ENCODE measurements at regions of chr4 and their contacts with region 1.

Region 1: DNA sequence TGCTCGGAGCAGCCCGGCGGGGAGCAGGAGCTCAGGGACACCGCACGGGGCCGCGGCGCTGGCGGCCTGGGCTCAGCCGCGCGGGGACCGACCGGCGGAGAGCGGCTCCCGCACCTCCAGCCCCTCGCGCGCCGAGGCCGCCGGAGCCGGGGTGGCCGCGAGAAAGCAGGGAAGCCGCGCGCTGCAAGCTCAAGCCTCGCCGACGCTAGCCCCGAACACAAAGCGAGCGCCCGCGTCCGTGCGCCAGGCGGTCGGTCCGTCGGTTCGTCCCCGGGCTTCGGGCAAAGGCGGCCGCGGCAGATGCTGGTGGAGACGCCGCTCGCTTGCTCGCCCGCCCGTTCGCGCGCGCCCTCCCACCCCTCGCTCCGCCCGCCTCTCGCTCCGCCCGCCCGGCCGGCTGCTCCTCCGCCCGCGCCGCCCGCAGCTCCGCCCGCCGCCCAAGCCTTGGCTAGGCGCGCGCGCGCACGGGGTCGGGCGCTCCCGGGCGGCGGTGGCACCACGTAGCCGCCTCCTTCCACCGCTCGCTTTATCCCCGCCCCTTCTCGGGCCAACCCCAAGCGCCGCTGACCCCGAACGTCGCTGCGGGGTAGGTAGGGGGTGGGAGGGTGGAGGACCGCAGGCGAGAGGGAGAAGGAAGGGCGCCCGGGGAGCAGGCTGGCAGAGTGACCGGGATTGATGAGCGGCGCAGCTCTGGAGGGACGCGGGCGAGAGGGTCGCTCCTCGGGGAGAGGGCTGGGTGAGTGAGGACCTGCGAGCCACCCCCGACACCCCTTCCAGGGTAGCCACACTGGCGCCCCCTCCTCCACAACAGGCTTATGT is at the start of gene TSPAN5:
- DNase-seq: peak; percentile 60 to 90 (median 75)
- ATAC-seq: peak; percentile 87
- H3K4me3 ChIP-seq: peak within 1 kb of the TSS; percentile 61
- H3K4me3 Mint-ChIP-seq: peak within 1 kb of the TSS; percentile 85 to 99 (median 92)
- H3K27ac ChIP-seq: peak within 1 kb of the TSS; percentile 65
- H3K27ac Mint-ChIP-seq: peak within 1 kb of the TSS; percentile 20 to 95 (median 84)
- H3K4me1 ChIP-seq: peaks cover 32 to 40% of the 10 kb centered on the region in 2 donors
- H3K4me1 Mint-ChIP-seq: peaks cover 56 to 87% (median 83%) of the 10 kb centered on the region in 7 donors
- H3K27me3 ChIP-seq: no peaks in the 10 kb centered on the region
- H3K27me3 Mint-ChIP-seq: no peaks in the 10 kb centered on the region
- total RNA-seq, gene TSPAN5: 3.3 to 31.6 (median 10.9) TPM

Region 2: GRCh38 chr4:98260579-98261290 is 397.8 kb before region 1 on chr4:
- CTCF ChIA-PET with region 1: no interaction called
- POLR2A ChIA-PET with region 1: no interaction called
- intact Hi-C with region 1: loop called (anchors 1 to 2 kb)
- DNase-seq: peak in 6 of 9 donors; percentile 69 to 95 (median 78)
- ATAC-seq: peak; percentile 85
- H3K4me3 ChIP-seq: peak overlapping the region; percentile 90
- H3K4me3 Mint-ChIP-seq: peak overlapping the region; percentile 92 to 98 (median 94)
- H3K27ac ChIP-seq: peak overlapping the region; percentile 86
- H3K27ac Mint-ChIP-seq: peak overlapping the region; percentile 84 to 97 (median 92)
- H3K4me1 ChIP-seq: peaks cover 5 to 12% of the 10 kb centered on the region in 2 donors
- H3K4me1 Mint-ChIP-seq: peaks cover 31 to 60% (median 54%) of the 10 kb centered on the region in 7 donors
- H3K27me3 ChIP-seq: no peaks in the 10 kb centered on the region
- H3K27me3 Mint-ChIP-seq: no peaks in the 10 kb centered on the region

Region 3: DNA sequence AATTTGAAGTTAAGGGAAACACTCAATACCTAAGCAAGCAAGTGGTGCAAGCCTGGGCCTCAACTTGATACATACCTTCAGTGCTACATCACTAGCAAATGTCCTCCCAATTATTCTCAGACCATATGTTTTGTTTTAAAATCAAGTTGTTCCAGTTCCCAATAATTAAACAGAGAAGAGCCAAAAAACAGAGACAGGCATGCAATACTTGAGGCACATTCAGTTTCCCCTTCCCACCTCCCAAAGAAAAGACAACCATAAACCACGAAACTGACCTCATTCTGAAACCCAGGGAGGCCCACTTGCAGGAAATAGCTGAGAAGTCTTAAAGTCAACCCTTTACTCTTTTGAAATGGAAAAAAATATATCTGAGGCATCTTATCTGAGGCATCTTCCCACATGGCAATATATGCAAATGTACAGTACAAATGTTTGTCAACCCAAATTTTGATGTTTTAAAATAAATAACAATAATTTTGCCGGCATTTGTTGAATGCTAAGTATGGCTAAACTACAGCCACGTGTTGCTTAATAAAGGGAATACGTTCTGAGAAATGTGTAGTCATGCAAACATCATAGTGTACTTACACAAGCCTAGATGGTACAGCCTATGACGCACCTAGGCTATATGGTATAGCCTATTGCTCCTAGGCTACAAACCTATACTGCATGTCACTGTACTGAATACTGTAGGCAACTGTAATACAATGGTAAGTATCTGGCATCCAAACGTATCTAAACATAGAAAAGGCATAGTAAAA is 147.6 kb before region 1 on chr4:
- CTCF ChIA-PET with region 1: no interaction called
- POLR2A ChIA-PET with region 1: no interaction called
- intact Hi-C with region 1: loop called in 1 of 2 experiments (anchors 2 kb)
- DNase-seq: peak in 1 of 9 donors; percentile 60
- ATAC-seq: no peak
- H3K4me3 ChIP-seq: no peak overlapping the region
- H3K4me3 Mint-ChIP-seq: peak overlapping the region in 1 of 10 donors; percentile 49
- H3K27ac ChIP-seq: no peak overlapping the region
- H3K27ac Mint-ChIP-seq: peak overlapping the region in 1 of 9 donors; percentile 19
- H3K4me1 ChIP-seq: peaks cover 0 to 5% of the 10 kb centered on the region in 2 donors
- H3K4me1 Mint-ChIP-seq: peaks cover 11 to 59% (median 29%) of the 10 kb centered on the region in 7 donors
- H3K27me3 ChIP-seq: no peaks in the 10 kb centered on the region
- H3K27me3 Mint-ChIP-seq: no peaks in the 10 kb centered on the region

Region 4: DNA sequence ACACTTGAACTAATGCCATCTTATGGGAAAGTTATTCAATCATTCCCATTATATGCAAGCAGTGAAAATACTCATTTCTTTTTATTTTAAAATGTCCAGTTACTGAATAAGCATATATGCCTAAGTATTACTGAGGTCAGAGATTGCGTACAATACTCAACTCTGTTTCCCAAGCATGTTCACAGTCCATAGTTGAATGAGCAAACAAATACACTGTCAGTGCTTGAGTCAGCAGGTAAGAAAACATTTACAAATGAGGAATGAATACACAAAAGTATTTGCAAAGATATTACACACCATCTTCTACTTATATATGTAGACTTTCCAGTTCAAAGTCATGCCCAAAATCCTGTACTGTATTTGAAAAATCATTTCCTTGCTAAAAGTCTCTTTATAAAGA is 74.2 kb before region 1 on chr4:
- CTCF ChIA-PET with region 1: no interaction called
- POLR2A ChIA-PET with region 1: no interaction called
- intact Hi-C with region 1: no loop called
- DNase-seq: no peak
- ATAC-seq: no peak
- H3K4me3 ChIP-seq: no peak overlapping the region
- H3K4me3 Mint-ChIP-seq: no peak overlapping the region
- H3K27ac ChIP-seq: no peak overlapping the region
- H3K27ac Mint-ChIP-seq: no peak overlapping the region
- H3K4me1 ChIP-seq: no peaks in the 10 kb centered on the region
- H3K4me1 Mint-ChIP-seq: peaks cover 15 to 42% (median 30%) of the 10 kb centered on the region in 7 donors
- H3K27me3 ChIP-seq: no peaks in the 10 kb centered on the region
- H3K27me3 Mint-ChIP-seq: no peaks in the 10 kb centered on the region

Region 5: DNA sequence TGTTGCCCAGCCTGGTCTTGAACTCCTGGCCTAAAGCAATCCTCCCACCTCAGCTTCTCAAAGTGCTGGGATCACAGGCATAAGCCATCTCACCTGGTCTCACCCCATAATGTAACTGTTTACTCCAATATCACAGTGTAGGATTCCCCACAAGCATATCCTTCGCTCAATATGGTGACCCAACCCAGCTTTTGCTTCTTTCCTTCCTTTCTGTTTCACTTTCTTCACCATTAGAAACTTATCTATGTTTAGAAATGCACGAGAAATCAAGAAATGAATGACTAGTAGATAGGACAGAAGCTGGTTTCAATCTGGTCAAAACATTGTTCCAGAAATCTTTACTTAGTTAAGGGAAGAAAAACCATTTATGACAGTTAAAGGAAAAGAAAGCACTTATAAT is 19.0 kb before region 1 on chr4:
- CTCF ChIA-PET with region 1: interaction called, 3 read pairs
- POLR2A ChIA-PET with region 1: interaction called, 5 read pairs
- intact Hi-C with region 1: loop called (anchors 1 kb)
- DNase-seq: peak in 7 of 9 donors; percentile 10 to 32 (median 15)
- ATAC-seq: peak; percentile 63
- H3K4me3 ChIP-seq: peak overlapping the region; percentile 36
- H3K4me3 Mint-ChIP-seq: peak overlapping the region; percentile 37 to 93 (median 82)
- H3K27ac ChIP-seq: peak overlapping the region; percentile 49
- H3K27ac Mint-ChIP-seq: peak overlapping the region; percentile 79 to 97 (median 87)
- H3K4me1 ChIP-seq: peaks cover 8 to 22% of the 10 kb centered on the region in 2 donors
- H3K4me1 Mint-ChIP-seq: peaks cover 30 to 56% (median 42%) of the 10 kb centered on the region in 7 donors
- H3K27me3 ChIP-seq: no peaks in the 10 kb centered on the region
- H3K27me3 Mint-ChIP-seq: no peaks in the 10 kb centered on the region

Region 6: DNA sequence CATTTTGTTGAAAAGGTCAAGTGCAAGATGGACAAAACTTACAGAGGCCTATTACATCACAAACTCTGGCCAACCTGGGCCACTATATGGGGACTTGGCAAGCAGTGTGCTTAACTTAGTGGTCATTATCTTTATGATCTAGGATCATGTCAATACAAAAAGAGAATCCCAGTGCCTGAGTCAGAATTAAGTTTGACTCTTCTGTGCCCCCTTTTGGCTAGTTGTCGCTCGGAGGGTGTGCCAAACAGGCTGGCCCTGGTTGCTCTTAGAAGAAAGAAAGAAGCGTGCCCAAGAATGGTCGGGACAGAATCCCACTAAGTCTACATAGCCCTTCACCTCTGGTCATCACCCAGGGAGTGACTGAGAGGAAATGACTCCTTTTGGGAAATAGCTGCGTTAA is 170.3 kb after region 1 on chr4:
- CTCF ChIA-PET with region 1: no interaction called
- POLR2A ChIA-PET with region 1: no interaction called
- intact Hi-C with region 1: loop called (anchors 5 kb)
- DNase-seq: peak in 5 of 9 donors; percentile 16 to 40 (median 20)
- ATAC-seq: no peak
- H3K4me3 ChIP-seq: no peak overlapping the region
- H3K4me3 Mint-ChIP-seq: no peak overlapping the region
- H3K27ac ChIP-seq: no peak overlapping the region
- H3K27ac Mint-ChIP-seq: no peak overlapping the region
- H3K4me1 ChIP-seq: no peaks in the 10 kb centered on the region
- H3K4me1 Mint-ChIP-seq: peaks cover 0 to 16% (median 0%) of the 10 kb centered on the region in 7 donors
- H3K27me3 ChIP-seq: no peaks in the 10 kb centered on the region
- H3K27me3 Mint-ChIP-seq: peaks cover 0 to 14% (median 0%) of the 10 kb centered on the region in 5 donors

Region 7: GRCh38 chr4:99405433-99406115 is 747.1 kb after region 1 on chr4:
- CTCF ChIA-PET with region 1: no interaction called
- POLR2A ChIA-PET with region 1: no interaction called
- intact Hi-C with region 1: loop called in 1 of 2 experiments (anchors 5 kb)
- DNase-seq: peak; percentile 13 to 62 (median 44)
- ATAC-seq: peak; percentile 86
- H3K4me3 ChIP-seq: no peak overlapping the region
- H3K4me3 Mint-ChIP-seq: no peak overlapping the region
- H3K27ac ChIP-seq: no peak overlapping the region
- H3K27ac Mint-ChIP-seq: no peak overlapping the region
- H3K4me1 ChIP-seq: no peaks in the 10 kb centered on the region
- H3K4me1 Mint-ChIP-seq: peaks cover 0 to 19% (median 0%) of the 10 kb centered on the region in 7 donors
- H3K27me3 ChIP-seq: no peaks in the 10 kb centered on the region
- H3K27me3 Mint-ChIP-seq: peaks cover 0 to 3% (median 0%) of the 10 kb centered on the region in 5 donors

Region 8: GRCh38 chr4:99949034-99949998 is 1290.8 kb after region 1 on chr4:
- CTCF ChIA-PET with region 1: no interaction called
- POLR2A ChIA-PET with region 1: interaction called, 3 read pairs
- intact Hi-C with region 1: loop called in 1 of 2 experiments (anchors 2 kb)
- DNase-seq: peak; percentile 63 to 90 (median 86)
- ATAC-seq: peak; percentile 49
- H3K4me3 ChIP-seq: peak overlapping the region; percentile 93
- H3K4me3 Mint-ChIP-seq: no peak overlapping the region
- H3K27ac ChIP-seq: peak overlapping the region; percentile 91
- H3K27ac Mint-ChIP-seq: no peak overlapping the region
- H3K4me1 ChIP-seq: peaks cover 34 to 37% of the 10 kb centered on the region in 2 donors
- H3K4me1 Mint-ChIP-seq: peaks cover 18 to 40% (median 31%) of the 10 kb centered on the region in 7 donors
- H3K27me3 ChIP-seq: no peaks in the 10 kb centered on the region
- H3K27me3 Mint-ChIP-seq: no peaks in the 10 kb centered on the region

Measured in naive thymus-derived CD4-positive, alpha-beta T cell (primary cell).